ENCODE measurements at regions of chr6 and their contacts with region 1.

Region 1: GRCh38 chr6:43608310-43608763 is 20.7 kb downstream of the GTPBP2 start:
- DNase-seq: peak; percentile 50 to 69
- ATAC-seq: peak; percentile 85 to 86
- H3K4me3 ChIP-seq: no peak overlapping the region
- H3K27ac ChIP-seq: peak overlapping the region in 1 of 2 experiments; percentile 54; a peak in 1 of 6 replicates
- H3K4me1 ChIP-seq: no peaks in the 10 kb centered on the region; the same call in 2 of the 3 replicates
- CTCF ChIP-seq: peak; percentile 64
- EP300 ChIP-seq: no peak
- POLR2A ChIP-seq: no peak
- RAD21 ChIP-seq: peak; percentile 46; a peak in 4 of 5 replicates

Region 2: DNA sequence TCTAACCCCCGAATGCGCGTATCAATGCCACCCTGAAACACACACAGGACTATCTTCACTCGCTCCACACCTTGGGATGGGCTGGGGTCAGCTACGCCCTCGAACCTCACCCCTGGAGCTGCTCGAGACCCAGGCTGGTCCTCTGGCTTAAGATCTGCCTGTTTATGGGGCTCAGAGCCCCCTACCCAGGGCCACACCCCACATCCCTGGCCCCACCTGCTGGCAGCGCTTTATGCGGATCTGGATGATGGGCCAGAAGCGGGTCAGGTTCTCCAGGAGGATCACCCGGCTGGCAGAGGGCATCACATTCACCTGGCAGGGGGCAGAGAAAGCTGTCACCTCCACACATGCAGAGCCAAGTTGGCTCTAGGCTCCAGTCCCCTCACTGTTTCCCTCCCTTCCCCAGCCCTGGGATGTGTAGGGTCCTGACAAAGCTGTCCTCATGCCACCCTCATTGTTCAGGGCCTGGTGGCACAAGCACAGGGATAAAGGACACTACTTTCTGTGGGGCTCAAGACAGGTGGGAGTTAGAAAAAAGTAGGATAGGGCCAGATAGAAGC is 562.9 kb before region 1 on chr6:
- CTCF ChIA-PET with region 1: no interaction called
- POLR2A ChIA-PET with region 1: no interaction called
- DNase-seq: no peak
- ATAC-seq: no peak
- H3K4me3 ChIP-seq: no peak overlapping the region
- H3K27ac ChIP-seq: no peak overlapping the region
- H3K4me1 ChIP-seq: no peaks in the 10 kb centered on the region
- CTCF ChIP-seq: no peak
- EP300 ChIP-seq: no peak
- POLR2A ChIP-seq: no peak
- RAD21 ChIP-seq: no peak

Region 3: GRCh38 chr6:43427406-43428111 is 180.8 kb before region 1 on chr6 and contains the start of gene ABCC10:
- CTCF ChIA-PET with region 1: no interaction called
- POLR2A ChIA-PET with region 1: no interaction called
- DNase-seq: peak; percentile 84 to 93
- ATAC-seq: peak; percentile 97 to 98
- H3K4me3 ChIP-seq: peak within 1 kb of the TSS; percentile 73
- H3K27ac ChIP-seq: peak within 1 kb of the TSS; percentile 87 to 91
- H3K4me1 ChIP-seq: peaks cover 9% of the 10 kb centered on the region
- CTCF ChIP-seq: peak; percentile 26; the same call in 1 of the 3 replicates
- EP300 ChIP-seq: no peak
- POLR2A ChIP-seq: peak; percentile 91
- RAD21 ChIP-seq: no peak
- polyA plus RNA-seq, gene ABCC10: 6.8 and 8.5 TPM in 2 replicates

Region 4: GRCh38 chr6:43593938-43594337 is 14.4 kb before region 1 on chr6:
- CTCF ChIA-PET with region 1: interaction called, 45 read pairs
- POLR2A ChIA-PET with region 1: interaction called, 3 read pairs
- DNase-seq: no peak
- ATAC-seq: no peak
- H3K4me3 ChIP-seq: no peak overlapping the region
- H3K27ac ChIP-seq: no peak overlapping the region
- H3K4me1 ChIP-seq: no peaks in the 10 kb centered on the region
- CTCF ChIP-seq: no peak
- EP300 ChIP-seq: no peak
- POLR2A ChIP-seq: no peak
- RAD21 ChIP-seq: no peak

Region 5: DNA sequence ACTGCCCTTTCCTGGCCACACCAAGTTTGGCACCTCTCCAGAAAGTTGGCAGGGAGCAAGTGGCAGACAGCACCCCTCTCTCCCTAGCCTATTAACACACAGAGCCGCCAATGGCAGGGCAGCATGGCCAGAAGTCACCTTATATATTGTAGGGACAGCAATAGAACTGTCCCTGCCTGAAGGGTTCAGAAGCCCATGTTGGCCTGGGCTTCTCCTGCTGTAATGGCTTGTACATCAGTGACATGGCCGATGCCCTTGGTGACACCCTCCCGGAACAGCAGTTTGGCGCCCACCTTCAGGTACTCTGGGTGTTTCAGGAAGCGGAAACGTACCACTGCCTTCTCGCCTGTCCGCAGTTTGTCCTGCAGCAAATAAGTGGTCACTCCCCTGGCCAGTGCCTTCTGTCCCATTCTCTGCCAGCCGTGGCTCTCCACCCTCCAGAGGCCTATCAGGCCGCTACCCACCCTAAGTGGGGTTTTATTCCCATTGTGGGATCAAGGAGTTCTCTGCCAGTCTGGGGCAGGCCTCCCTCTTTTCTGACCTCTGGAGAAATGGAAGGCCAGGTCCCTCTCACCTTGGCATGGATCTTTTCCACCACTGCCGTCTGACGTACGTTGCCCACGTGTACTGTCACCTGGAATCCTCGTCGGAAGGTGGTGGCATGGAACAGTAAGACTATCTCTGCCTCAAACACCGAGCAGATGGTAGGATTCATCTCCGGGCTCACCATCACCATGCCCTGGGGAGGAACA is 13.3 kb after region 1 on chr6:
- CTCF ChIA-PET with region 1: interaction called, 29 read pairs
- POLR2A ChIA-PET with region 1: no interaction called
- DNase-seq: no peak
- ATAC-seq: no peak; a peak in 1 of 6 replicates
- H3K4me3 ChIP-seq: no peak overlapping the region
- H3K27ac ChIP-seq: no peak overlapping the region
- H3K4me1 ChIP-seq: peaks cover 2% of the 10 kb centered on the region; the same call in 1 of the 3 replicates
- CTCF ChIP-seq: no peak
- EP300 ChIP-seq: no peak
- POLR2A ChIP-seq: no peak
- RAD21 ChIP-seq: no peak

Region 6: DNA sequence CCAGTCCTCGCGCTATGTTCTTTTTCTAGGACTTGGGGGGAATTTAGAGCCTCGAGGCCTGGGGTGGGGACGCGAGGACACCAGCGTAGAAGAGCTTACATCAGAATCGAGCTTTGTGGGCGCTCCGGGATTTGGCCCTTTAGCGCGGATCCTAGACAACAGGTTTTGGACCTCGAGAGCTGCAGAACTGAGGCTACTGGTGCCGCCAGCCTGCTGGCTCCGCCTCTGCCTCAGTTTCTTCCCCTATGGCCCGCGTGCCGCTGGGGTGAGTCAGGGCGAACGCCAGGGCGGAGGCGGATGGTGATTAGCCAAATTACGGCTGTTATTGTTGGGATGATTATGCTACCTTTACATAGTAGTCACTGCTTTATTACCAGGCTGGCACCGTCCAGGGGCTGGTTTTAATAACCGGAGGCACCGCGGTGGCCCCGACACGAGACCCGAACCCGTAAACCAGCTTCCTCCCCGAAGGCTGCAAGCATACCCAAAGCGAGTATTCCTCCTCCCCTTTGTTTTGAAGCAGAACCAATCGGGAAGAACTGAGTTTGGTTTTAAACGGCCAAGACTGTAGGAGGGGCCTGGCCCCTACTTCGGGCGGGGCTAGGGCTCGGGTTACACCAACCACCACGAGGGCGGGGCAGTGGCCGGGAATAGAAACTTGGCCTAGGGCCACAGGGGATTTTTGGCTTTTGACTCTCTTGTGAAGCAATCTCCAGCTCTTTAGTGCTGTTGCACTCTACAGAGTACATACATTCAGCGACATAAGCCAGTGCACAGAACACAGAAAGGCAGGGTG is 21.4 kb after region 1 on chr6:
- CTCF ChIA-PET with region 1: interaction called, 21 read pairs
- POLR2A ChIA-PET with region 1: interaction called, 3 read pairs
- DNase-seq: peak; percentile 95 to 97
- ATAC-seq: peak; percentile 82 to 92
- H3K4me3 ChIP-seq: peak overlapping the region; percentile 96
- H3K27ac ChIP-seq: peak overlapping the region; percentile 88 to 100
- H3K4me1 ChIP-seq: peaks cover 26% of the 10 kb centered on the region
- CTCF ChIP-seq: no peak
- EP300 ChIP-seq: no peak
- POLR2A ChIP-seq: no peak
- RAD21 ChIP-seq: no peak

Region 7: DNA sequence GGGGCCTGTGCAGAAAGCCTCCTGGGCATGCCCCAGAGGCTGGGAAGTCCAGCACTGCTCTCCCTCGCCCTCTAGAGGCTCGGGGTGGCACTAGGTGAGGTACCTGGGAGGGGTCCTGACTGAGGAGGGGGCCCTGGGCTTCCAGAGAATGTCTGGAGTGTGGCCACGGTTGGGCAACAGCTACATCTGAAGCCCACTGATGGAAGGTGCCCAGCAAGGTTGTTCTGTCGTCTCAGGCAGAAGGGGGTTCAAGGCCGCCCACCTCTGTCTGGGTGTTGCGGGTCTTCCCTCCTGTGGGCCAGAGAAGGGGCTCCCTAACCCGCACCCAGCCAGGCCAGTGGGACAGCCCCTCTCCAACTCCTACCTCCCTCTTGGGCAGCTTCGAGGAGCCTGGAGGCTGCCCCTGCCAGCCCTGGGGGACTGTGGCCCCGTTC is 150.3 kb after region 1 on chr6:
- CTCF ChIA-PET with region 1: no interaction called
- POLR2A ChIA-PET with region 1: no interaction called
- DNase-seq: peak in 1 of 2 experiments; percentile 27
- ATAC-seq: peak; percentile 57 to 85; a peak in 4 of 6 replicates
- H3K4me3 ChIP-seq: no peak overlapping the region
- H3K27ac ChIP-seq: 0 out of 6 replicates have a peak overlapping the region, but pooled peaks of 1 of the 2 experiments have one; percentile 27
- H3K4me1 ChIP-seq: no peaks in the 10 kb centered on the region
- CTCF ChIP-seq: peak; percentile 52
- EP300 ChIP-seq: no peak
- POLR2A ChIP-seq: no peak
- RAD21 ChIP-seq: peak; percentile 53 to 60

Region 8: DNA sequence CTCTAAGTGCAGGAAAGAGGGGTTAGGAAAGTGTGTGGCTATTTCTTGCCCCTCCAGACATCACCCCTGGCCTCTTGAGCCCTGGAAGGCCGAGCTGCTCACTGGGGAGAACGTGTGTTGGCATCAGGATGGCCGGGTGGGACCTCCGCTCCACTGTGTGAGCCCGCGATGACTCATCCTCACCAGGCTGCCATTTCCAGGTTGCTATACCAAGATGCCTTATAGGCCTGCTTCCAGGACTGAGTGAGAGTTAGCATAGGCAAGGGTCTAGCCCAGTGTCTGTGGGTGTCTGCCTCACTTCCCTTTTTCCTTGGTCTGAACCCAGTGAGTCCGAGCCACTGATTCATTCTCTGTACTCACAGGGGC is 413.9 kb after region 1 on chr6:
- CTCF ChIA-PET with region 1: no interaction called
- POLR2A ChIA-PET with region 1: no interaction called
- DNase-seq: no peak
- ATAC-seq: peak in 1 of 2 experiments; percentile 62; a peak in 3 of 6 replicates
- H3K4me3 ChIP-seq: no peak overlapping the region
- H3K27ac ChIP-seq: peak overlapping the region; percentile 13 to 81; a peak in 5 of 6 replicates
- H3K4me1 ChIP-seq: peaks cover 24% of the 10 kb centered on the region
- CTCF ChIP-seq: no peak
- EP300 ChIP-seq: no peak
- POLR2A ChIP-seq: no peak
- RAD21 ChIP-seq: no peak